Heart left ventricle (tissue), 16 donors: ENCODE measurements at regions of chr7 and their contacts with region 1.

Region 1: DNA sequence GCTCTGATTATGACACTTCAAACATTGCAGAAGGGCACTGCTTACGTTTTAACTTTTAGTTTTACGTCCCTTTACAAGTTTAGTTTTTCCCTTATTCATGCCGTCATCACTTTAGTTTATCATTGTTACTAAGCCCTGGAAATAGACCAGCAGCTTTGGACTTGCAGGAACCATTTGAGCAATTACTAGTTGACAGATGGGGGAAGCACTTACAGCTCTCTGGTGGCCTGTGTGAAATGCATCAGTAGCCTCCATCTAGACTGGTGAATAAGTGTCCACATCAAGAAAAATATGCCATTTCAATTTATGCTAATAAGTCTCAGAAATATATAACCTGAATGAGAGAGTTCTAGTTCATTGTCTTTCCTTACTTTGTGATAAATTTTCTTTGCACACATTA is 194.9 kb upstream of the GRM3 start:
- DNase-seq: no peak
- ATAC-seq: no peak
- H3K4me3 ChIP-seq: no peak overlapping the region
- H3K27ac ChIP-seq: no peak overlapping the region
- H3K4me1 ChIP-seq: no peaks in the 10 kb centered on the region
- H3K27me3 ChIP-seq: no peaks in the 10 kb centered on the region
- CTCF ChIP-seq: no peak
- POLR2A ChIP-seq: no peak

Region 2: GRCh38 chr7:86347327-86347726 is 101.5 kb before region 1 on chr7:
- intact Hi-C with region 1: no loop called
- DNase-seq: no peak
- ATAC-seq: no peak
- H3K4me3 ChIP-seq: no peak overlapping the region
- H3K27ac ChIP-seq: no peak overlapping the region
- H3K4me1 ChIP-seq: no peaks in the 10 kb centered on the region
- H3K27me3 ChIP-seq: no peaks in the 10 kb centered on the region
- CTCF ChIP-seq: no peak
- POLR2A ChIP-seq: no peak

Region 3: GRCh38 chr7:86391813-86392212 is 57.0 kb before region 1 on chr7:
- intact Hi-C with region 1: loop called in 1 of 10 experiments (anchors 10 kb)
- DNase-seq: no peak
- ATAC-seq: no peak
- H3K4me3 ChIP-seq: no peak overlapping the region
- H3K27ac ChIP-seq: no peak overlapping the region
- H3K4me1 ChIP-seq: no peaks in the 10 kb centered on the region
- H3K27me3 ChIP-seq: no peaks in the 10 kb centered on the region
- CTCF ChIP-seq: no peak
- POLR2A ChIP-seq: no peak

Region 4: GRCh38 chr7:86558680-86559501 is 110.0 kb after region 1 on chr7:
- intact Hi-C with region 1: no loop called
- DNase-seq: no peak
- ATAC-seq: no peak
- H3K4me3 ChIP-seq: no peak overlapping the region
- H3K27ac ChIP-seq: no peak overlapping the region
- H3K4me1 ChIP-seq: no peaks in the 10 kb centered on the region
- H3K27me3 ChIP-seq: no peaks in the 10 kb centered on the region
- CTCF ChIP-seq: no peak
- POLR2A ChIP-seq: no peak